Mammary epithelial cell (primary cell): ENCODE measurements at regions of chr1 and their contacts with region 1.

Region 1: GRCh38 chr1:228691926-228692325 is 43.4 kb upstream of the RHOU start:
- DNase-seq: peak; percentile 43
- H3K4me3 ChIP-seq: no peak overlapping the region
- H3K27ac ChIP-seq: no peak overlapping the region
- H3K4me1 ChIP-seq: no peaks in the 10 kb centered on the region
- H3K27me3 ChIP-seq: peaks cover 2% of the 10 kb centered on the region
- CTCF ChIP-seq: peak; percentile 36 to 61

Region 2: DNA sequence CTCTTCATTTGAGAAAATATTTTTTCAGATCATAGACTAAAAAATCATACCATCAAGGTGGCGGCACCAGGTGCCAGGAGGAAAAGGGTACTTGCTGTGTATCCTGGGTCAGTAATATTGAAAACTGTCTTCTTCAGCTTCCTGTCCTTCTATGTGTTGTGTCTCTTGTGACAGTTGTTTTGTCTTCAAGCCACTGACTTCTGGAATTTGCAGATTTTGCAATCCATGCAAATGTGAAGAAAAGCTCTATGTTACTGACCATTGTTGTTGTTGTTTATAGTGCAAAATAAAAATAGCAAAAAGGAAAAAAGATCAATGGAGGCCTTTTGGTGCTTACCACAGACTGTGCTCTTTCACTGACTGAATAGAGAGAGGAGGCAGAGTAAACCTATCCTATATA is 39.8 kb before region 1 on chr1:
- CTCF ChIA-PET with region 1: no interaction called
- dilution Hi-C with region 1: no loop called
- in situ Hi-C with region 1: no loop called
- intact Hi-C with region 1: no loop called
- DNase-seq: no peak
- H3K4me3 ChIP-seq: no peak overlapping the region
- H3K27ac ChIP-seq: no peak overlapping the region
- H3K4me1 ChIP-seq: peaks cover 12% of the 10 kb centered on the region
- H3K27me3 ChIP-seq: no peaks in the 10 kb centered on the region
- CTCF ChIP-seq: no peak

Region 3: GRCh38 chr1:229156872-229157271 is 464.9 kb after region 1 on chr1:
- CTCF ChIA-PET with region 1: no interaction called
- dilution Hi-C with region 1: no loop called
- in situ Hi-C with region 1: no loop called
- intact Hi-C with region 1: loop called (anchors 2 kb)
- DNase-seq: no peak
- H3K4me3 ChIP-seq: no peak overlapping the region
- H3K27ac ChIP-seq: no peak overlapping the region
- H3K4me1 ChIP-seq: no peaks in the 10 kb centered on the region
- H3K27me3 ChIP-seq: no peaks in the 10 kb centered on the region
- CTCF ChIP-seq: peak; percentile 11 to 55

Region 4: DNA sequence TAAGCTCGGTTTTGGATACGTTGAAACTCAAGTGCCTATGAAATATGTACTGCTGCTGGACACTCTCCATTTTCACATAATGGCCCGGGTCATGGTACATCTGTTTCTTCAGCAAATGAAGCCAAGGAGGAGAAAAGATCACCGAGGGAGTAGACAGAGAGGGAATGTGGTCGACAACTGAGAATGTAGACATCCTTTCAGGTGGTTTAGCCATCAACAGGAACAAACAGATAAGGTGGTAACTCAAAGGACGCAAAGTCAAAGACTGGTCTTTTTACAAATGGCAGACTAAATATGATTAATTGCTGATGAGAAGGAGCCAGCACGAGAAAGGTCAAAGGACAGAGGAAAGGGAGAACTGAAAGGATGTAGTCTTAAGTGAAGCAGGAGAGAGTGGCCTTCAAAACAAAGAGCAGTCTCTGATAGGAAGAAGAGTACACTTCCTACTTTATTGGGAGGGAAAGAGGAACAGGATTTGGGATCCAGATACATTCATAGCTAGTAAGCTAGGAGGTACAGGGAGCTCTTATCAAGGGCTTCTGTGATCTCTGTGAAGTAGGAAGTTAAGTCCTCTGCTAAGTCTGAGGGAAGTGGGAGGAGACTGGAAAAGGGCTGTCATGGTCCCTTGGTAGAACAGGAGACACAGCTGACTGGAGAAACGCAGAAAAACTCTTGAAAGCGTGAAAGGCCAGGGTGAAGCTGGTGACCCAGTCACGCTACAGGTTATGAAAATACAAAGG is 787.9 kb after region 1 on chr1:
- CTCF ChIA-PET with region 1: no interaction called
- dilution Hi-C with region 1: no loop called
- in situ Hi-C with region 1: no loop called
- intact Hi-C with region 1: loop called (anchors 10 kb)
- DNase-seq: no peak
- H3K4me3 ChIP-seq: no peak overlapping the region
- H3K27ac ChIP-seq: no peak overlapping the region
- H3K4me1 ChIP-seq: no peaks in the 10 kb centered on the region
- H3K27me3 ChIP-seq: no peaks in the 10 kb centered on the region
- CTCF ChIP-seq: no peak